Left cardiac atrium (tissue), 4 donors: ENCODE measurements at regions of chr4 and their contacts with region 1.

Region 1: DNA sequence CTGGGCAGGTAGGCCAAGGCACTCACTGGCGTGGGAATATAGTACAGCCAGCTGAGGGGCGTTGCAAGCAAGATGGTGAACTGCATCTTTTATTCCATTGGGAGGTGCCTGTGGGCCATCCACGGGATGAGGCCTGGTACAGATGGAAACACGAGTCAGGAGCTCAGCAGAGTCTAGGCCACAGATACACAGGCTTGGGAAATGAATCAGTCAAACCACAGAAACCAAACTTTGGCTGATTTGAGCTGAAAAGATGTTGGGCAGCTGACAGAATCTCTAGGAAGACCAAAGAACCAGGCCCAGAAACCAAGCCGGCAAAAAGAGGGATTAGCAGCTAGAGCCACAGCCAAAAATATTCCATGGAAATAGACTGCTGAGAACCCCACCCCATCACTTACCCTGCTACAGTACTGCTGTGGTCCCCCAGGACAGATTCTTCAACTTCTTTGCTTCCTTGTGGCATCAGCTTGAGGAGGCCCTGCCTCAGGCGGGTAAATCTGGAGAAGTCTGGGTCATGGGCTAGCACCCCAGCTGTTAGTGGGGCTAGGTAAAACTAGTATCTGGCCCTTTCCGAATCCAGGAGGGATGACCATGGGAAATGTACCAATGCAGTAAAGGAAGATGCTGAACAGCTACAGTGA is 75.4 kb downstream of the TMEM131L start:
- DNase-seq: no peak
- ATAC-seq: peak in 1 of 2 donors; percentile 43

Region 2: GRCh38 chr4:153497988-153498967 is 43.3 kb before region 1 on chr4:
- intact Hi-C with region 1: loop called in 1 of 2 experiments (anchors 5 kb)
- DNase-seq: no peak
- ATAC-seq: peak; percentile 67 to 79

Region 3: DNA sequence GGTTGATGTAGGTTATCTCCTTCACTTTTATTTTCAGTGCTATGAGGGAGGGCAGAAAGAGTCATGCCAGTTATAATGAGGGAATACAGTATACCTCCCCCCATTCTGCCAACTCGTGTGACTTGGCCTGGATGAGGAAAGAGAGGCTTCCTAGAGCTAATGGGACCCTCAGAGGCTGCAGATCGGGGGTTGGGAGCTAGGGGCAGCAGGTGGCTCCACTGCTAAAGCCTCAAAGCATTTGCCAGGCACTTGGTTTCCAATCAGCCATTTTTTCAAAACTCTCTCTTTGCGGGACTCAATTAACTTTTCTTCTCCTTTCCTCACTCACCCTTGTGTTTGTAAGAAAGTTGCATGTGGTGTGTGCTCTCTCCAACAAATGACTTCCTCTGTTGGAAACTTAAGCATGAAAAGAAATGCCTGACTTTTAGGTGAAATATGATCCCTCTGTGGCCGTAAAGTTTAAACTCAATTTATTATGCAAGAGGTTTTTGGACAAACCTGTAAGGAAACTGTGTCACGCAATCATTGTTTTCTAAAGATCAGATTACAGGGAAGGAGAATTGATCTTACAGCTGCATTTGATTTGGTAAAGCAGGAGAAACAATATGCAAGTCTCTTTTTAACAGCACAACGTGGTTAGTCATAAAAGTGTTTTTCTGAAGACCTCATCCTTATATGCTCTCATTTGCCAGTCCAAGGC is 240.3 kb after region 1 on chr4:
- intact Hi-C with region 1: no loop called
- DNase-seq: no peak
- ATAC-seq: no peak

Region 4: GRCh38 chr4:153901220-153901619 is 359.6 kb after region 1 on chr4:
- intact Hi-C with region 1: no loop called
- DNase-seq: no peak
- ATAC-seq: no peak